B cell (primary cell): ENCODE measurements at regions of chr7 and their contacts with region 1.

Region 1: DNA sequence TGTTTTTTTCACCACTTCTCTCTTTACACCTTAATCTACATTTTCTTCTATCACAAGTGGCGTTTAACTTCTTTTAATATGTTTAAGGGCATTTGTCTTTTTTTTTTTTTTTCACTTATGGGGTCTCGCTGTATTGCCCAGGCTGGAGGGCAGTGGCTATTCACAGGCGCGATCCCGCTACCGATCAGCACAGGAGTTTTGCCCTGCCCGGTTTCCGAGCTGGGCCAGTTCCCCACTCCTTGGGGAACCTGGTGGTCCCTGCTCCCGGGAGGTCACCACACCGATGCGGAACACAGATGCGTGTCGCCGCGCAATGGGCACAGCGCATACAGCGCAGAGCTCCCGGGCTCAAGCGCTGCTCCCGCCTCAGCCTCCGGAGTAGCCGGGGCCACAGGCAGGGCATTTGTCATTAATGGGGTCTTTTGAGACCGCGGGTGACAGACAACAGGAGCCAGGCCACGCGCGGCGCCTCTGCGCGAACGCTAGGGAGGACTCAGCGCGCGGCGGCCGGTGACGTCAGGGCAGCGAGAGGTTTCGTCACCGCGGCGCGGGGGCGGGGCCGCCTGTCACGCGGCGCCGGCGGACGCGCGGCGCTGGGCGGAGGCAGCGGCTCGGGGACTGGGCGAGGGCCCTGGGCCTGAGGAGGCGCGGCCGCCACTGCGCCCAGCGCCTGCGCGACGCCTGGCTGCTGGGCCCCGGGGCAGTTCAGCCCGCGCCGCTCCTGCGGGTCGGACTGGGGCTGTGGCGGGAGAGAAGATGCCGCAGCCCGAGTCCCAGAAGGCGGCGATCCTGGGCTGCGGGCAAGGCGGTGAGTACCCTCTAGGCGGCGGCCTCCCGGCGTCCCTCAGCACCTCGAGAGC is at the start of gene GALNT11:
- DNase-seq: peak; percentile 94
- ATAC-seq: peak; percentile 92
- H3K4me3 ChIP-seq: peak within 1 kb of the TSS; percentile 49 to 82 (median 72)
- H3K4me3 Mint-ChIP-seq: peak within 1 kb of the TSS; percentile 89
- H3K27ac ChIP-seq: peak within 1 kb of the TSS; percentile 65 to 82
- H3K27ac Mint-ChIP-seq: peak within 1 kb of the TSS; percentile 80
- H3K4me1 ChIP-seq: peaks cover 6 to 14% of the 10 kb centered on the region in 2 donors
- H3K4me1 Mint-ChIP-seq: peaks cover 16% of the 10 kb centered on the region
- H3K27me3 ChIP-seq: peaks cover 0 to 3% (median 0%) of the 10 kb centered on the region in 4 experiments
- H3K27me3 Mint-ChIP-seq: no peaks in the 10 kb centered on the region
- CTCF ChIP-seq: peak; percentile 41
- total RNA-seq, gene GALNT11: 14.5 and 15.2 TPM in 2 replicates

Region 2: DNA sequence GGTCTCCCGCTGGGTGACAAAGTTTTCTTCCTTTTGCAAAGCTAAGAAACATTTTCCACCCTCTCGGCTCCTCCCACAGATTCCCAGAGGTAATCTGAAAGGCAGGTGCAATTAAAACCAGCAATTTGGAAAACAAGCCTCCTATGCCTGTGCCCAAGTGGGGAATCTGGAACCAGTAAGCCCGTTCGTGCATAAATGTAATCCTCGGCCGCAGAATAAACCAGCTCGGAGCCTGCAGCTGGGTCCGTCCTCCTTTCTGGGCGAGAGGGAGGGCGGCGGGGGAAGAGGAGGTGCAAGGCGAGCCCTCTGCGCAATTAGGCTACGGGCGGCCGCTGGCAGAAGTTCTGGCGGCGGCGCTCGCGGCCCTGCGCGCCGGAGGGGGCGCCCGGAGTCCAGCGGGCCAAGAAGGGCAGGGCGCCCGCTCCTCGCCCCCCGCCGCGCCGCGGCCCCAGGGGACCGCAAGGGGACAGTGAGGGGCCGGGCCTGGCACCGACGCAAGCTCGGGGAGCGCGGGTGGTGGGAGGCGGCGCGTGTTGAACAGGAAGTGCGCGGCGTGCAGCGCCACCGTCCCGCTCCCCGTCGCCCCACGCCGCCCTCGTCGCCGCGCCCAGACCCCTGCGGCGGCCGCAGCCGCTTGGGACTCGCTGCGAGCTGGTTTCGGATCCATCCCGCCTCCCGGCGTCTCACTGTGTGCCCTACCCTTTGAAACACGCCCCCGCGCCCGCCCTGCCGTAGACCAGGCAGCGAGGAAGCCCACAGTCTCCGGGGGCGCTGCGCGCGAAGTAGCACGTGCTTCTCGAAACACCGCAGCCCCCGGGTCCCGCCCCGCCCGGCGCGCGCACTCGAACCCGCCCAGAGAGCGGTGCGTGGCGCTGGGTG is 148.2 kb before region 1 on chr7 and contains the start of gene PRKAG2:
- CTCF ChIA-PET with region 1: interaction called, 3 read pairs
- POLR2A ChIA-PET with region 1: no interaction called
- intact Hi-C with region 1: loop called (anchors 5 kb)
- DNase-seq: peak; percentile 86
- ATAC-seq: peak; percentile 57
- H3K4me3 ChIP-seq: peak within 1 kb of the TSS; percentile 65 to 100 (median 91)
- H3K4me3 Mint-ChIP-seq: peak within 1 kb of the TSS; percentile 98
- H3K27ac ChIP-seq: peak within 1 kb of the TSS; percentile 57 to 70
- H3K27ac Mint-ChIP-seq: peak within 1 kb of the TSS; percentile 95
- H3K4me1 ChIP-seq: peaks cover 10 to 16% of the 10 kb centered on the region in 2 donors
- H3K4me1 Mint-ChIP-seq: peaks cover 16% of the 10 kb centered on the region
- H3K27me3 ChIP-seq: no peaks in the 10 kb centered on the region
- H3K27me3 Mint-ChIP-seq: no peaks in the 10 kb centered on the region
- CTCF ChIP-seq: peak; percentile 23
- total RNA-seq, gene PRKAG2: 51.8 and 56.3 TPM in 2 replicates

Region 3: DNA sequence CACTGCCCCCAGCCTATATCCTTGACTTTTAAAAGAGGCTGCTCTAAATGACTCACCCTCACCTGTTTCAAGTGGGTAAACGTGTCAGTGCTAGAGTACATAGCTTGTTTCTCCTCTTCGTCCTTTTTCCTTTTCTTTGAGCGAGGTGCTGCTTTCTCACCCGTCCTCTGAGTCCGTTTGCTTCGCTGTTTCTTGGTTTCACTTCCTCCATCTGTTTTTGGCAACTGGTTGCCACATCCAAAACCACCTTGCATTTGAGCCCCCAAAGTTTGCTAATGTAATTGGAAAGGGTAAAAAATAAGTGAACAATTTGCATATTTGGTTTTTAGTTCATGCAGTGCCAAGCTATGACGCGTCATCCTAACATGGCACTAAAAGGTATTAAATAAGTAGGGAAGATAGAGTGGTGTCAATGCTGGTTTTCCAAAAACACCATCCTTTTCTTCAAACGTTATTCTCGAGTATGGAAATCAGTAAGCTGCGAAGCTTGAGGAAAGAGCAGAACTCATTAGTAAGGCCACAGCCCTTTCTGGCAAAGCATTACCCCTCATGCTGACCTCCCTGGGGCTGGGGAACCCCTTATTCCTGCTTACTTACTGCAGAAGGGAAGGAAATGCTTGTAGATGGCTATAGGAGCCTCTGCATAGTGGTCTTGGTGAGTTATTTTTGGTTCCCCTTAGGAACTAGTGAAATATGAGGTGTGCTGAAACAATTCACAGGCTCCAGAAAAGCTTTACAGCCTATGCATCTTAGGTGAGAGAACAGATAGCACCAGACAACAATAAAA is 133.7 kb after region 1 on chr7:
- CTCF ChIA-PET with region 1: no interaction called
- POLR2A ChIA-PET with region 1: no interaction called
- intact Hi-C with region 1: loop called (anchors 5 kb)
- DNase-seq: peak; percentile 86
- ATAC-seq: peak; percentile 90
- H3K4me3 ChIP-seq: peak overlapping the region in 3 of 5 experiments; percentile 18 to 48 (median 36)
- H3K4me3 Mint-ChIP-seq: peak overlapping the region; percentile 67
- H3K27ac ChIP-seq: peak overlapping the region; percentile 86 to 87
- H3K27ac Mint-ChIP-seq: peak overlapping the region; percentile 89
- H3K4me1 ChIP-seq: peaks cover 29 to 31% of the 10 kb centered on the region in 2 donors
- H3K4me1 Mint-ChIP-seq: peaks cover 40% of the 10 kb centered on the region
- H3K27me3 ChIP-seq: no peaks in the 10 kb centered on the region
- H3K27me3 Mint-ChIP-seq: no peaks in the 10 kb centered on the region
- CTCF ChIP-seq: no peak

Region 4: DNA sequence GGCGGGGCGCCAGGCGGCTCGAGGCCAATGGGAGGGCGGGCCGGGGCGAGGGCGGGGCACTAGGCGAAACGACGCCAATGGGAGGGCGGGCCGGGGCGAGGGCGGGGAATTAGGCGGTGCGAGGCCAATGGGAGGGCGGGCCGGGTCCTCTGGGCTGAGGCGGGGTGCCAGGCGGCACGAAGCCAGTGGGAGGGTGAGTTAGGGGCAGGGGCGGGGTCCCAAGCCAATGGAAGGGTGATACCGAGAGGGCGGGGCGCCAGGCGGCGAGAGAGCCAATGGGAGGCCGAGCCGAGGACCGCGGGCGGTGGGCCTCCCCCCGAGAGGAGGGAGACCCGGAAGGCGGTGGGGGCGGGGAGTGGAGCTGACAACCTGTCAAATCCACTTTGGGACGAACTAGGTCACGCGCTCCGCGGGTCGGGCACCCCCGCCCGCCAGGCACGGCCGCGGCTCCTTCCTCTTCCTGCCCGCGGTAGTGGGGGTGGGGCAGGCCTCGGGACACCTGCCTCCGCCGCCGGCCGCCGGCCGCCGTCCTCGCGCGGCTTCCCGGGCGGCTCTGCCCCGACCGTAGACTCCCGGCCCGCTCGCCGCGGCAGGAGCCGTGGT is 438.5 kb after region 1 on chr7:
- CTCF ChIA-PET with region 1: no interaction called
- POLR2A ChIA-PET with region 1: no interaction called
- intact Hi-C with region 1: loop called (anchors 5 kb)
- DNase-seq: peak; percentile 100
- ATAC-seq: peak; percentile 91
- H3K4me3 ChIP-seq: peak overlapping the region in 4 of 5 experiments; percentile 69 to 99 (median 86)
- H3K4me3 Mint-ChIP-seq: peak overlapping the region; percentile 96
- H3K27ac ChIP-seq: peak overlapping the region; percentile 87 to 96
- H3K27ac Mint-ChIP-seq: peak overlapping the region; percentile 70
- H3K4me1 ChIP-seq: peaks cover 20 to 24% of the 10 kb centered on the region in 2 donors
- H3K4me1 Mint-ChIP-seq: peaks cover 24% of the 10 kb centered on the region
- H3K27me3 ChIP-seq: no peaks in the 10 kb centered on the region
- H3K27me3 Mint-ChIP-seq: no peaks in the 10 kb centered on the region
- CTCF ChIP-seq: no peak